ENCODE measurements at regions of chr12 and their contacts with region 1.

Region 1: GRCh38 chr12:3658327-3659163 is 94.4 kb downstream of the CRACR2A start:
- DNase-seq: no peak
- H3K4me3 ChIP-seq: no peak overlapping the region
- H3K27me3 ChIP-seq: no peaks in the 10 kb centered on the region; the same call in 1 of the 2 replicates
- CTCF ChIP-seq: peak; percentile 45

Region 2: GRCh38 chr12:3671330-3672112 is 13.0 kb after region 1 on chr12:
- CTCF ChIA-PET with region 1: interaction called, 10 read pairs
- POLR2A ChIA-PET with region 1: no interaction called
- DNase-seq: no peak
- H3K4me3 ChIP-seq: no peak overlapping the region
- H3K27me3 ChIP-seq: no peaks in the 10 kb centered on the region
- CTCF ChIP-seq: no peak

Region 3: GRCh38 chr12:3777206-3777809 is 118.8 kb after region 1 on chr12:
- CTCF ChIA-PET with region 1: interaction called, 11 read pairs
- POLR2A ChIA-PET with region 1: no interaction called
- DNase-seq: no peak
- H3K4me3 ChIP-seq: no peak overlapping the region
- H3K27me3 ChIP-seq: peaks cover 4% of the 10 kb centered on the region; the same call in 1 of the 2 replicates
- CTCF ChIP-seq: peak; percentile 78